Left ventricle myocardium superior (tissue), 1 donor: ENCODE measurements at regions of chr17 and their contacts with region 1.

Region 1: GRCh38 chr17:17496189-17497064 is at the start of gene RASD1:
- DNase-seq: peak; percentile 97
- ATAC-seq: peak; percentile 90
- total RNA-seq, gene RASD1: 50.8 TPM

Region 2: GRCh38 chr17:17455173-17455572 is 41.3 kb before region 1 on chr17:
- intact Hi-C with region 1: no loop called
- DNase-seq: no peak
- ATAC-seq: no peak

Region 3: DNA sequence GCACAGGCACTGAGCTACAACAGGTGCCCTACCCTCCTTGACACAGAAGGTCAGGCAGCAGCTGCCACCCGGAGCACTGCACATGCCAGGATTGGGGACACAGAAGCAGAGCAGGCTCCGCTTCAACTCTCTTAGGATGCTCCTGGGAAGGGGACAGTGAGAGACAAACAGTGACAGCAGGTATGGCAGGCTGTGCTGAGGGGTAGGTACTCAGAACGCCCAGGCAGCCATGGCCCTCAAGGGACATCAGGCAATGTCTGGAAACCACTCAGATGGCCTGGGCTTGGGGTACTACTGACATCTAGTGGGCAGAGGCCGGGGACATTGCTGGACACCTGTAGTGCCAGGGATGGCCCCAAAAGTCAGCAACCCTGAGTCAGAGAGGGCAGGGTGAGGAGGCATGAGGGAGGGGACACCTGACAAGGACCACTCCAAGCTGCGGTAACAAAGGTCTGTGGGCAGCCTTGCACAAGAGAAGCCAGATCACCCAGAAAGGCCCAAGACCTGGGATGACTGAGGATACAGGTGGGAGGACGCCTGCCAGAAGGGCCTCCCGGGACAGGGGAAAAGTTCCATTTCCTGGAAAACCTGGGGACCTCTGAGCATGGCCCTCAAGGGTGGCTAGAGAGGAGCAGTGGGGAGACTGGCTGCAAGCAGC is 73.8 kb after region 1 on chr17:
- intact Hi-C with region 1: loop called (anchors 5 kb)
- DNase-seq: peak; percentile 70
- ATAC-seq: peak; percentile 42